ENCODE measurements at regions of chr15 and their contacts with region 1.

Region 1: DNA sequence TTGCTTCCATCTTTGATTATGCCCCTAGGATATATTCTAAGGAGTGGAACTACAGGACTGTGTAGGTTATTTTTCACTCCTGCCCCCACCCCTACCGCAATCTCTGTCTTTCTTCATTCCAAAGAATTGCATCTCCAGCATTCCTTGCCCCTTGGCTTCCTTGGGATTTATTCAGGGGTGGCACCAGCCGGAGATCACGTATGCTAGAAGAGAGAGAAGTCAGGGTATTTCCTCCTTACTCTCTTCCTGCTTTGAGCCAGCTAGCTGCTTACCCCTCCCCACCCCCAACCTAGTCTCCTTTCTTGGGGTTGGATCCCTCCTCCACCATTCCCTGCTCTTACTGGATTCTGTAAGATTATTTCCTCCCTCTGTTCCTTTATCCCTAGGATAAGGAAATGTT is 35.0 kb upstream of the DENND4A start:
- DNase-seq: no peak
- ATAC-seq: no peak
- H3K4me3 ChIP-seq: no peak overlapping the region
- H3K27ac ChIP-seq: no peak overlapping the region
- H3K4me1 ChIP-seq: peaks cover 5 to 25% of the 10 kb centered on the region in 2 donors
- H3K27me3 ChIP-seq: no peaks in the 10 kb centered on the region
- CTCF ChIP-seq: no peak
- POLR2A ChIP-seq: no peak

Region 2: GRCh38 chr15:65773386-65774111 is 53.5 kb before region 1 on chr15:
- in situ Hi-C with region 1: no loop called
- intact Hi-C with region 1: no loop called
- DNase-seq: no peak
- ATAC-seq: no peak
- H3K4me3 ChIP-seq: no peak overlapping the region
- H3K27ac ChIP-seq: no peak overlapping the region
- H3K4me1 ChIP-seq: peaks cover 0 to 3% of the 10 kb centered on the region in 2 donors
- H3K27me3 ChIP-seq: no peaks in the 10 kb centered on the region
- CTCF ChIP-seq: no peak
- POLR2A ChIP-seq: no peak

Region 3: GRCh38 chr15:65862682-65863081 is 35.6 kb after region 1 on chr15:
- in situ Hi-C with region 1: no loop called
- intact Hi-C with region 1: loop called (anchors 1 kb)
- DNase-seq: peak in 1 of 2 donors; percentile 20
- ATAC-seq: no peak
- H3K4me3 ChIP-seq: no peak overlapping the region
- H3K27ac ChIP-seq: no peak overlapping the region
- H3K4me1 ChIP-seq: peaks cover 7 to 9% of the 10 kb centered on the region in 2 donors
- H3K27me3 ChIP-seq: no peaks in the 10 kb centered on the region
- CTCF ChIP-seq: peak in 2 of 5 experiments; percentile 13 to 38
- POLR2A ChIP-seq: no peak

Measured in gastrocnemius medialis (tissue), 4 donors.